Posterior cingulate gyrus (tissue), 11 donors: ENCODE measurements at regions of chr1 and their contacts with region 1.

Region 1: GRCh38 chr1:163528710-163529348 is 207.1 kb downstream of the NUF2 start:
- DNase-seq: peak in 4 of 10 donors; percentile 11 to 81 (median 28)

Region 2: GRCh38 chr1:163191301-163191700 is 337.5 kb before region 1 on chr1:
- intact Hi-C with region 1: no loop called
- DNase-seq: no peak

Region 3: DNA sequence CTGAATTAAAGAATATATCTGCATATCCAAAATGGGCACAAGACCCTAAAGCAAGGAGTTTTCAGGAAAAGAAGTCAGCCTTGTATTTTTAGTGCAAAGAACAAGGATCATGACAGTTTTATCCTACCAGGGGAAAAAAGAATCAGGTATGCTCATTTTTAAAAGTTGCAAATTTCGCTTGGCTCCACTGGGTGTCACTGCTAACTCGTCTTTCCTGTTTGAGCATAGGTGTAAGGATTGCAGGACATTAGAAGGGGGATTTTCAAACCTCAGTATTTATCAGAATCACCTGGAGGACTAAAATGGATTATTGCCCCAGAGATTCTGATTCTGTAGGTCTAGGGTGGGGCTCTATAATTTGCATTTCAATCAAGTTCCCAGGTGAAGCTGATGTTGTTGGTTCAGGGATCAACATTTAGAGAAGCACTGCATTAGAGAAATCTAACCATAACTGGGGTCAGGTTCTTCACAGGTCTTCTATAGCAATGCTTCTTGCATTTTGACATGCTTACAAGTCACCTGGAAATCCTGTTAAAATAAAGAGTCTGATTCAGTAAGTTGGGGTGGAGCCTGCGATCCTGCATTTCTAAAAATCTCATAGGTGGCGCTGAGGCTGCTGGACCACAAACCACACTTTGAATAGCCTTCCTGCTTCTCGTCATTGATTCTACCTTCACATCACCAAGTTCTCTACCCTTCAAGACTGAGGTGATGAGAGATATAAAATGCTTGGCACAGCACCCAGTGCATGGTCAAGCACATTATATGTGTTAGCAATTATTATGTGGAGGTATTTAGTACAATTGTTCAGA is 167.5 kb before region 1 on chr1:
- intact Hi-C with region 1: loop called (anchors 5 kb)
- DNase-seq: peak in 1 of 10 donors; percentile 21

Region 4: DNA sequence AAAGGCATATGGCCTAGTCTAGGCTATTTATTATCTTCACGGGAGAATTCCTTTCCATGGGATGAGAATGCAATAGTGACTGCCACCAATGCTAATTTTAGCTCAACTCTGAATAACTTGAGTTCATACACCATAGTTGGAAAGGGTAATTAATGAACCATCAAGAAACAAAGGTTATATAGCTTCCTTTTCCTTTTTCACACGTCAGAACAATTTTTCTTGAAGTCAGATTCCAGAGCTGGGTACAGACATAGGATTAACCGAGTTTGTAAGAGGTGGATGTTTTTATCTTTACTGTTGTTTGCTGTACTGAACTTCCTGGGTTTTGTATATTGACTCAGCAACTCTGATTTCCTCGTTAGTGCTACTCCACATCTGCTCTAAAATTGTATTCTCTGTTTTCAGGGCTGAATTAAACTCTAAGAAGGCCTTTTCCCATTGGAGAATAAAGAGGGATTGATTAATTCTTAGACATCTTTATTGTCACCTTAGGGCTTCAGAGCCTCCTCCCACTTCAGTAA is 54.9 kb after region 1 on chr1:
- intact Hi-C with region 1: no loop called
- DNase-seq: no peak